AG04450 (cell line): ENCODE measurements at regions of chr11 and their contacts with region 1.

Region 1: GRCh38 chr11:66051766-66052663 is at the start of gene SF3B2:
- DNase-seq: peak; percentile 96
- H3K4me3 ChIP-seq: peak within 1 kb of the TSS; percentile 87
- H3K27ac ChIP-seq: peak within 1 kb of the TSS; percentile 83
- H3K27me3 ChIP-seq: peaks cover 4% of the 10 kb centered on the region
- CTCF ChIP-seq: no peak
- polyA plus RNA-seq, gene SF3B2: 88.2 and 97.1 TPM in 2 replicates

Region 2: DNA sequence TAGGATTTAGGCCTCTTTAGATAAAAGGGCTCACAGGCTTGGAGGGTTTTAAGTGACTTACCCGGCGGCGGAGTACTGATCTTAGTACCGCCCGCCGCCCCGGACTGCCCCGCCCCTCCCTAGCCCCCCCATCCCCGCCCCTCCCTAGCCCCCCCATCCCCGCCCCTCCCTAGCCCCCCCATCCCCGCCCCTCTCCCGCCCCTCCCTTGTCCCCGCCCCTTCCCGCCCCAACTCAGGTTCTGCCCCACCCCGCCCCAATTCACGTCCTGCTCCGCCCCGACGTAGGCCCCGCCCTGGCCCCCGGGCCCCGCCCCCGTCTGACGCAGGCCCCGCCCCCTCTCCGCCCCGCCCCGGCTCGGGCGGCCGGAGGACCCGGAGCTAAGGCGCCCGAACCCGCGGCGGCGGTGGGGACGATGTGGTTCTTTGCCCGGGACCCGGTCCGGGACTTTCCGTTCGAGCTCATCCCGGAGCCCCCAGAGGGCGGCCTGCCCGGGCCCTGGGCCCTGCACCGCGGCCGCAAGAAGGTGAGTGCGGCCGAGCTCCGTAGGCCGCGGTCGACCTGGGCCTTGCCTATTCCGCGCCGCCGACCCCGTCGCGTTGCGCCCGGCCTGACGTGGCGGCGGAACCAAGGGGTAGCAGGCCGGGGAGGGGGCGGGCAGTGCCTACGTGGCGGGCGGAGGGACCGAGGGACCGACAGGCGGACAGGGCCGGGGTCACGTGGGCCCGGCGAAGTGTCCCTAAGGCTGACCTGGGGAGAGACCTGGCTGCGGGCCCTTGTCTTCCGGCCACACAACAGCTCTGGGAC is 527.1 kb before region 1 on chr11 and contains the start of gene SCYL1:
- CTCF ChIA-PET with region 1: no interaction called
- POLR2A ChIA-PET with region 1: interaction called, 10 read pairs
- DNase-seq: no peak
- H3K4me3 ChIP-seq: peak within 1 kb of the TSS; percentile 92
- H3K27ac ChIP-seq: peak within 1 kb of the TSS; percentile 61
- H3K27me3 ChIP-seq: no peaks in the 10 kb centered on the region
- CTCF ChIP-seq: no peak
- polyA plus RNA-seq, gene SCYL1: 60.9 and 90.0 TPM in 2 replicates

Region 3: DNA sequence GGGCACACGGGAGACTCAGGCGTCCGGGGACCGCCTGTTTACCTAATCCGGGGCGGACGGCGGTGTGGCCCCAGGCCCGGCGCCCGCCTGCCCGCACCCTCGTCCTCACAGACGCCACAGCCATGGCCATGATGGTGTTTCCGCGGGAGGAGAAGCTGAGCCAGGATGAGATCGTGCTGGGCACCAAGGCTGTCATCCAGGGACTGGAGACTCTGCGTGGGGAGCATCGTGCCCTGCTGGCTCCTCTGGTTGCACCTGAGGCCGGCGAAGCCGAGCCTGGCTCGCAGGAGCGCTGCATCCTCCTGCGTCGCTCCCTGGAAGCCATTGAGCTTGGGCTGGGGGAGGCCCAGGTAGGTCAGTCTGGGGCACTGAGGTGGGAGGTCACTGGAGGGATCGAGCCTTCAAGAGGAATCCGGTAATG is 206.5 kb after region 1 on chr11:
- CTCF ChIA-PET with region 1: interaction called, 10 read pairs
- POLR2A ChIA-PET with region 1: interaction called, 4 read pairs
- DNase-seq: no peak
- H3K4me3 ChIP-seq: peak overlapping the region; percentile 87
- H3K27ac ChIP-seq: no peak overlapping the region
- H3K27me3 ChIP-seq: no peaks in the 10 kb centered on the region
- CTCF ChIP-seq: no peak